T-cell (primary cell): ENCODE measurements at regions of chr7 and their contacts with region 1.

Region 1: DNA sequence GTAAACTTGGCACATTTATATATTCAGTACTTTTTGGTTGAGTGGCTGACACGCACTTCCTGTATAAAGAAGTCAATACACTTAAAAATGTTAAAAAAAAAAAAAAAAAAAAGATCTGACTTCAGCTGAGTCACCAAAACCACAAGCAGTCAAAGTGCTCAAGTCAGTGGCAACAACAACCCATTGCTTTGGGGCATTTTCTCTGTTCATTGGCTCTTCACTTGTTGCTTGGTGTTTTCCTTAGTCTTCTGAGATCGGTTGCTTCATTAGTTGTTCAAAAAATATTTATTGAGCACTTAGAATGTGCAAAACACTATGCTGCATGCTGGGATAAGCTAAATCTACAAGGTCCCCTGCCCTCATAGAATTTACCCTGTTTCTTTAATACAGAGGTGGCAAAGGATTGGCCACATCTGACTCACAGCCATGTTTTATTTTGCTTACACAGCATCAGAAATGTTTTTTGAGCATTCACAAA is 63.7 kb downstream of the ZNRF2 start:
- DNase-seq: peak in 34 of 35 experiments; percentile 8 to 87 (median 49)
- ATAC-seq: peak; percentile 89 to 93 (median 90)
- H3K4me3 ChIP-seq: peak overlapping the region in 1 of 2 donors; percentile 11
- H3K4me3 Mint-ChIP-seq: peak overlapping the region; percentile 34 to 75 (median 55)
- H3K27ac ChIP-seq: peak overlapping the region; percentile 86
- H3K27ac Mint-ChIP-seq: peak overlapping the region; percentile 96 to 99
- H3K4me1 ChIP-seq: peaks cover 14% of the 10 kb centered on the region in 2 experiments
- H3K4me1 Mint-ChIP-seq: peaks cover 55 to 76% (median 76%) of the 10 kb centered on the region in 3 donors
- H3K27me3 ChIP-seq: no peaks in the 10 kb centered on the region
- H3K27me3 Mint-ChIP-seq: no peaks in the 10 kb centered on the region

Region 2: DNA sequence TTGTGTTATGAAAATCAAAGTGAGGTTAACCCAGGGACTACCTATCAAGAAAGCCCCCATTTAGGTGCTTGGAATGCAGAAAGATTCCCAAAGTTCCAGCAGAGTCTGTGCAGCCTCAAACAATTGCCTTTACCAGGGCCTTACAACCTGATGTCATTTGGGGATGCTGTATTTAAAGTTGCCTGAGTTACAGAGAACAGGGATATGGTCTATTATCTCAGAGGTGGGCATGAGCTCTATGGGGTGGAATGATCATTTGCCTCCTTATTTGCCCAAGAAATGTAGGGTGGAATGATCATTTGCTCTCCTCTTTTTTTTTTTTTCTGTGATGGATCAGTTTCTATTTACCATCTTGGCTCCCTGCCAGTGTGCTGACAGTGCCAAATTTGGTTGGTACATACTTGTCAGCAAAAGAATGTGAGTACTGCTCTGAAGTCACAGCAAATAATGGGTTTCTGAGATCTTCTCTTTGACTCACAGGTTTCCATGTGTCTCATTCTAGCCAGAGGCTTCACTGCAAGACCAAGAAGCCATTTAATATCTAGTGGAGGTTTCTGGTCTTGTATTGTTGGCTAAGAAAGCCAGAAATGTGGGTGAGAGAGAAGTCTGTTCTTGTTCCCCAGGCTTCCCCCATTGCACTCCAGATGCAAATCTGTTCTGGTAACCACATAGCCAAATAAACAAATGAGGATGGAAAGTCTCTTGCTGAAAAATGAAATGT is 109.2 kb before region 1 on chr7:
- CTCF ChIA-PET with region 1: no interaction called
- POLR2A ChIA-PET with region 1: no interaction called
- DNase-seq: peak in 1 of 35 experiments; percentile 12
- ATAC-seq: no peak
- H3K4me3 ChIP-seq: no peak overlapping the region
- H3K4me3 Mint-ChIP-seq: no peak overlapping the region
- H3K27ac ChIP-seq: no peak overlapping the region
- H3K27ac Mint-ChIP-seq: no peak overlapping the region
- H3K4me1 ChIP-seq: no peaks in the 10 kb centered on the region
- H3K4me1 Mint-ChIP-seq: peaks cover 0 to 8% (median 0%) of the 10 kb centered on the region in 3 donors
- H3K27me3 ChIP-seq: no peaks in the 10 kb centered on the region
- H3K27me3 Mint-ChIP-seq: peaks cover 9 to 12% of the 10 kb centered on the region in 2 donors

Region 3: GRCh38 chr7:30276203-30276900 is 71.8 kb before region 1 on chr7:
- CTCF ChIA-PET with region 1: interaction called, 7 to 67 read pairs
- POLR2A ChIA-PET with region 1: interaction called, 3 to 6 read pairs
- DNase-seq: peak in 34 of 35 experiments; percentile 10 to 74 (median 36)
- ATAC-seq: peak; percentile 70 to 86 (median 77)
- H3K4me3 ChIP-seq: no peak overlapping the region
- H3K4me3 Mint-ChIP-seq: no peak overlapping the region
- H3K27ac ChIP-seq: no peak overlapping the region
- H3K27ac Mint-ChIP-seq: peak overlapping the region in 1 of 2 donors; percentile 8
- H3K4me1 ChIP-seq: no peaks in the 10 kb centered on the region
- H3K4me1 Mint-ChIP-seq: peaks cover 6 to 13% (median 8%) of the 10 kb centered on the region in 3 donors
- H3K27me3 ChIP-seq: no peaks in the 10 kb centered on the region
- H3K27me3 Mint-ChIP-seq: no peaks in the 10 kb centered on the region

Region 4: DNA sequence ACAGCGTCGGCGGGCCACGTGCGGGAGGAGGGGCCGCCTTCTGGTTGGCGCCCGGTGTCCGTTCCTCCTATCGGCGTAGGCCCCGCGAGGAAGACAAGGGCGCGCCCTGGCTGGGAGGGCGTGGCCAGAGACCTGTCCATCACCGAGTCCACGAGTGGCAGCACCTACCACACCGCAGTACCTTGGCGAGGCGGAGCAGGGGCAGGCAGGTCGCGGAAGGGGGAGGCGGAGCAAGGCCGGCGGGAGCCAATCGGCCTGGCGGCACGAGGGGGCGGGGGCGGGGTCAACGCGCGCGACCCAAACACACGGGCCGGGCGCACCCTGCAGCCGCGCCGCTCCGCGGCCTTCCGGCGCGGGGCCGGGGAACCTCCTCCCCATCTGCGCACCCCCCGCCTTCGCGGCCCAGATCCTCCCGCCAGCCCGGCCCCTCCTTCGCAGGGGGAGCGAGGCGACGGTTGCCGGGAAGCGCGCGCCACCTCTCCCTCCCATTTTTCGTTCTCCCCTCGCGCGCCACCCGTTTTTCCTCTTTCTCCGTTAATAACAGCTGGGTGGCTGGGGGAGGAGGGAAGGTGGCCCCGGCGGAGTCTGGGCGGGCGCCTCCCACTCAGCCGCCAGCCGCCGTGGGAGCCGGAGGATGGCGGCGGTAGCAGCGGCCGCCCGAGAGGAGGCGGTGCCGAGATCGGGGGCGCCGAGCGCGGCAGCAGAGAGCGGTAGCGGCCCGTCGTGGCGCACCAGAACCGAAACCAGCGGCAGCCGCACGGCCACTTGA is 63.6 kb before region 1 on chr7 and contains the start of gene ZNRF2:
- CTCF ChIA-PET with region 1: interaction called in 1 of 2 experiments, 67 read pairs
- POLR2A ChIA-PET with region 1: interaction called, 5 to 11 read pairs
- DNase-seq: peak; percentile 95 to 100 (median 99)
- ATAC-seq: peak; percentile 82 to 86 (median 86)
- H3K4me3 ChIP-seq: peak within 1 kb of the TSS; percentile 69 to 79
- H3K4me3 Mint-ChIP-seq: peak within 1 kb of the TSS; percentile 77 to 99 (median 83)
- H3K27ac ChIP-seq: peak within 1 kb of the TSS; percentile 76
- H3K27ac Mint-ChIP-seq: peak within 1 kb of the TSS; percentile 91
- H3K4me1 ChIP-seq: peaks cover 12 to 17% of the 10 kb centered on the region in 2 experiments
- H3K4me1 Mint-ChIP-seq: peaks cover 44 to 52% (median 51%) of the 10 kb centered on the region in 3 donors
- H3K27me3 ChIP-seq: no peaks in the 10 kb centered on the region
- H3K27me3 Mint-ChIP-seq: no peaks in the 10 kb centered on the region
- total RNA-seq, gene ZNRF2: 22.4 to 38.4 (median 30.8) TPM

Region 5: GRCh38 chr7:30322271-30323005 is 25.7 kb before region 1 on chr7:
- CTCF ChIA-PET with region 1: interaction called, 5 to 8 read pairs
- POLR2A ChIA-PET with region 1: interaction called, 6 to 13 read pairs
- DNase-seq: peak in 17 of 35 experiments; percentile 1 to 65 (median 16)
- ATAC-seq: peak; percentile 83 to 91 (median 86)
- H3K4me3 ChIP-seq: peak overlapping the region in 1 of 2 donors; percentile 37
- H3K4me3 Mint-ChIP-seq: peak overlapping the region; percentile 80 to 82 (median 81)
- H3K27ac ChIP-seq: peak overlapping the region; percentile 91
- H3K27ac Mint-ChIP-seq: peak overlapping the region; percentile 96 to 97
- H3K4me1 ChIP-seq: peaks cover 4 to 20% of the 10 kb centered on the region in 2 experiments
- H3K4me1 Mint-ChIP-seq: peaks cover 79 to 86% (median 81%) of the 10 kb centered on the region in 3 donors
- H3K27me3 ChIP-seq: no peaks in the 10 kb centered on the region
- H3K27me3 Mint-ChIP-seq: no peaks in the 10 kb centered on the region

Region 6: DNA sequence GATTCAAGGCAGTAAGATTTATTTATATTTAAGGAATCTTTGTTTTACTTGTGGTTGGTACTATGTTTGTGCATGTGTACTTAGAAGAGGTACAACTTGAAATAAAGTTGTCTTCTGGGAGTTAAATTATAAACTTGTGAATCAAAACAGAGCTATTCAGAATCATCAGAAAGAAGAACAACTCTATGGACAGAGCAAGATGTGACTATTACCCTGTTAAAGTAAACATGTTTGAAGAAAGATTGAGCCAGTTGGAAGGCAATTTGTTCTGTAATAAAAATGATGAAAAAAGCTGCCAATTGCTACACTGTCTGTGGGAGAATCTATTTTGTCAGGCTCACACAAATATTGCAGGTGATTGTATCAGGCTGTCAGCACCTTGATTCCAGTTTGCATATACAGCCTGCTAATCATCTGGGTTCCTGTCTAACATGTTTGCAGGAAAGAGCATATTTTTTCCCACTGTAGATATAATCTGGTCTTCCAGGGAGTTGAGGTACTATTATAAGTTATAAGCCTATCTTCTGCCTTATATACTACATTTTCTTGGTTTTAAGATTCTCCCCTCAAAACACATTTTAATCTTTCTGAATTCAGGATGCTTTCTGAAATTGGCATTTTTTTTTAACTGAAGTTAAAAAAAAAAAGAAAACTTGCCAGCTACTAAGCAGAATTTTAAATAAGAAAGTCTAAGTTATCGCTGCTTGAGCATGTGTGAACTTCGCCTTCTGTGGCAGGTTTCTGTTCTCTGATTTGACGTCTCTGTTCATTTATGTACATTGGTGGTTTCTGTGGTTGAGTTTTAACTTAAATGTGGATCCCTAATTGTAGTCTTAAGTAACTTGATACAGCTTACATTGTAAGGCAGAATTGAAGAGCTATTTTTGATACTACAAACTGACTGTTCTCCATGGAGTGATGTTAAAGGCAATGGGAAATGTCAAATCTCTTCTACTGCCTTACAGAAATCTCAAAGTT is 17.7 kb before region 1 on chr7:
- CTCF ChIA-PET with region 1: interaction called, 10 to 13 read pairs
- POLR2A ChIA-PET with region 1: interaction called in 1 of 2 experiments, 4 read pairs
- DNase-seq: peak in 27 of 35 experiments; percentile 3 to 73 (median 25)
- ATAC-seq: peak; percentile 72 to 96 (median 84)
- H3K4me3 ChIP-seq: peak overlapping the region in 1 of 2 donors; percentile 10
- H3K4me3 Mint-ChIP-seq: peak overlapping the region; percentile 56 to 73 (median 60)
- H3K27ac ChIP-seq: peak overlapping the region; percentile 73
- H3K27ac Mint-ChIP-seq: peak overlapping the region; percentile 88 to 90
- H3K4me1 ChIP-seq: peaks cover 6 to 17% of the 10 kb centered on the region in 2 experiments
- H3K4me1 Mint-ChIP-seq: peaks cover 63 to 79% (median 78%) of the 10 kb centered on the region in 3 donors
- H3K27me3 ChIP-seq: no peaks in the 10 kb centered on the region
- H3K27me3 Mint-ChIP-seq: no peaks in the 10 kb centered on the region

Region 7: GRCh38 chr7:30389791-30390190 is 41.7 kb after region 1 on chr7:
- CTCF ChIA-PET with region 1: no interaction called
- POLR2A ChIA-PET with region 1: no interaction called
- DNase-seq: no peak
- ATAC-seq: no peak
- H3K4me3 ChIP-seq: no peak overlapping the region
- H3K4me3 Mint-ChIP-seq: no peak overlapping the region
- H3K27ac ChIP-seq: no peak overlapping the region
- H3K27ac Mint-ChIP-seq: no peak overlapping the region
- H3K4me1 ChIP-seq: no peaks in the 10 kb centered on the region
- H3K4me1 Mint-ChIP-seq: no peaks in the 10 kb centered on the region
- H3K27me3 ChIP-seq: no peaks in the 10 kb centered on the region
- H3K27me3 Mint-ChIP-seq: no peaks in the 10 kb centered on the region

Region 8: DNA sequence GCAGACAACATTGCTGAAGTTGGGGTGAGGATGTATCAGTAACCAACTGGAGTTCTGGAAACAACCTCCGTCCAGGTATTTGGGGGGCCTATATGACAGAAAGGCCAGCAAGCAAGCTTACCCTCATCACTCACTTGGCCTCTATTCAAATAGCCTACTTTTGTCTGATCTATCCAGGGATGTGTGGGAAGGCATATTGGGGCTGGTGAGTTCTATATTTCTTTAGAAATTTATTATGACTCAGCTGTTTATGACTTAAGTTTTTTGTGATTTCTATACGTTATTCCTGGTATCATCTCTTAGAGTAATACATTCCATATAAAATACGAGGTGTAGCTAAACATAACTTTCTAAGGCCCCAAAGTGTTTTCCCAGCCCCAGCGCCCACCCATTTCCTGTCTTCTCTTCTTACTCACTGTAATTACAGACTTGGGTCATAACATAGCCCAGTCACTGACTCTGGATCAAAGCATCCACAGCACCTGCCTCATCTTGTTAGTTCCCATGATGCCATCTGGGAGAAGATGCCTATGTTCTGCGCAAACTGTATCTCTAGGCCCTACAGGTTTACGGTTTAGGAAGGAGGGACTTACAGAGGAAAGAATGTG is 264.6 kb after region 1 on chr7:
- CTCF ChIA-PET with region 1: no interaction called
- POLR2A ChIA-PET with region 1: no interaction called
- DNase-seq: no peak
- ATAC-seq: no peak
- H3K4me3 ChIP-seq: no peak overlapping the region
- H3K4me3 Mint-ChIP-seq: no peak overlapping the region
- H3K27ac ChIP-seq: no peak overlapping the region
- H3K27ac Mint-ChIP-seq: no peak overlapping the region
- H3K4me1 ChIP-seq: no peaks in the 10 kb centered on the region
- H3K4me1 Mint-ChIP-seq: peaks cover 12 to 17% (median 17%) of the 10 kb centered on the region in 3 donors
- H3K27me3 ChIP-seq: no peaks in the 10 kb centered on the region
- H3K27me3 Mint-ChIP-seq: no peaks in the 10 kb centered on the region

Region 9: DNA sequence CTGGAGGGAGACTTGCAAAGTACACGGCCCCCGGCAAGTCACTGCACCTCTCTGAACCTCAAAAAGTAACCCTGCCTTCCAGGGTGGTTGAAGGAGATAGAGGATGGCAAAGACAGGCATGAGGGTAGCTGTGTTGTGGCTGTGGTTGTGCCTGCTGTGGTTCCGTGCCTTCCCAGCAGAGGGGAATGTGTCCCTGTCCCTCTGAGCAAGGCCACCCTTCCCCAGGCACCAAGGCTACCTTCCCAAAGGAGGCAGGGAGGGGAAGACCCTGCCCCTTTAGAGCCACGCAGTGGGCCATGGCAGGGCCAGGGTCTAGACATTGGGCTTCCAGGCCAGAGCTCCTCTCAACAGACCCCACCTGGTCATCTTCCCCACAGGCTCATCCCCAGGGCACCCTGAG is 315.3 kb after region 1 on chr7:
- CTCF ChIA-PET with region 1: interaction called in 1 of 2 experiments, 11 read pairs
- POLR2A ChIA-PET with region 1: no interaction called
- DNase-seq: no peak
- ATAC-seq: no peak
- H3K4me3 ChIP-seq: no peak overlapping the region
- H3K4me3 Mint-ChIP-seq: no peak overlapping the region
- H3K27ac ChIP-seq: no peak overlapping the region
- H3K27ac Mint-ChIP-seq: no peak overlapping the region
- H3K4me1 ChIP-seq: no peaks in the 10 kb centered on the region
- H3K4me1 Mint-ChIP-seq: no peaks in the 10 kb centered on the region
- H3K27me3 ChIP-seq: peaks cover 0 to 19% of the 10 kb centered on the region in 2 experiments
- H3K27me3 Mint-ChIP-seq: peaks cover 0 to 4% of the 10 kb centered on the region in 2 donors